K562 (cell line): ENCODE measurements at regions of chr6 and their contacts with region 1.

Region 1: GRCh38 chr6:113994918-113995342 is 24.0 kb upstream of the HDAC2 start:
- DNase-seq: peak; percentile 21 to 56 (median 38)
- ATAC-seq: peak; percentile 97
- H3K4me3 ChIP-seq: no peak overlapping the region
- H3K27ac ChIP-seq: no peak overlapping the region
- H3K4me1 ChIP-seq: no peaks in the 10 kb centered on the region
- H3K27me3 ChIP-seq: no peaks in the 10 kb centered on the region
- CTCF ChIP-seq: peak; percentile 67 to 94 (median 82)
- EP300 ChIP-seq: no peak
- POLR2A ChIP-seq: no peak
- RAD21 ChIP-seq: peak; percentile 66 to 78

Region 2: GRCh38 chr6:114096561-114097172 is 101.7 kb after region 1 on chr6:
- CTCF ChIA-PET with region 1: no interaction called
- POLR2A ChIA-PET with region 1: no interaction called
- in situ Hi-C with region 1: no loop called
- intact Hi-C with region 1: loop called (anchors 10 kb)
- DNase-seq: peak; percentile 40 to 60 (median 55)
- ATAC-seq: peak; percentile 62; the same call in 2 of the 3 replicates
- H3K4me3 ChIP-seq: no peak overlapping the region
- H3K27ac ChIP-seq: no peak overlapping the region
- H3K4me1 ChIP-seq: no peaks in the 10 kb centered on the region
- H3K27me3 ChIP-seq: no peaks in the 10 kb centered on the region
- CTCF ChIP-seq: peak; percentile 33 to 73 (median 48); a peak in 4 of 6 replicates
- EP300 ChIP-seq: no peak
- POLR2A ChIP-seq: no peak
- RAD21 ChIP-seq: peak; percentile 34 to 68

Region 3: GRCh38 chr6:115896538-115897129 is 1901.7 kb after region 1 on chr6:
- CTCF ChIA-PET with region 1: no interaction called
- POLR2A ChIA-PET with region 1: no interaction called
- in situ Hi-C with region 1: no loop called
- intact Hi-C with region 1: loop called (anchors 10 kb)
- DNase-seq: peak; percentile 17 to 39 (median 25)
- ATAC-seq: peak; percentile 72
- H3K4me3 ChIP-seq: no peak overlapping the region
- H3K27ac ChIP-seq: no peak overlapping the region
- H3K4me1 ChIP-seq: no peaks in the 10 kb centered on the region
- H3K27me3 ChIP-seq: no peaks in the 10 kb centered on the region
- CTCF ChIP-seq: peak; percentile 33 to 63 (median 54); a peak in 5 of 6 replicates
- EP300 ChIP-seq: no peak
- POLR2A ChIP-seq: no peak
- RAD21 ChIP-seq: peak; percentile 73